ENCODE measurements at regions of chr4 and their contacts with region 1.

Region 1: DNA sequence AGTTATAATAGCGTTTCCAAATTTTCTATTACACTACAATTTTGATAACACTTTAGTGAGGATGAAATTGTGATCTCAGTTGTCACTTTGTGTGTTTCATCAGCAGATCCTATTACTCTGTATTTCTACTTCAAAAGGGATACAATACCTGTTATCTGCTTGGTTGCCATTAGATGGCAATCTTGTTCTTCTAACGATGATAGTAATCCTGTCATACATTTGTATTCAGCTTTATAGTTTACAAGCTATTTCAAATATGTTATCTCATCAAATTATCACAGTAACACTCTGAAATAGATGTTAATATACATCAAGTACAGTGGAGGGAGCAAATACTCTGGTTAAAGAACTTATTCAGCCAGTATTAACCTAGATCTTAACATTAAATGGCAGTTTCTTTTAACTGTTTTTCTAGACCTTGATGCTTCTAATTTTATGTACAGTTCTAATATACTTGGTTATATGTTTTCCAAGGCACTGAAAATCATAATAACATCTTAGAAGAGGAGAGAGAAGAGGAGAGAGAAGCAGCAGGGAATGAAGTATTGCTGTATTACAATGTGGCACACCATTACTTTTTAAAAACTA is 292.0 kb downstream of the CCSER1 start:
- H3K4me3 Mint-ChIP-seq: no peak overlapping the region
- H3K27ac Mint-ChIP-seq: no peak overlapping the region
- H3K4me1 Mint-ChIP-seq: no peaks in the 10 kb centered on the region
- H3K27me3 Mint-ChIP-seq: no peaks in the 10 kb centered on the region

Region 2: GRCh38 chr4:90745176-90745575 is 326.0 kb after region 1 on chr4:
- intact Hi-C with region 1: no loop called
- H3K4me3 Mint-ChIP-seq: no peak overlapping the region
- H3K27ac Mint-ChIP-seq: no peak overlapping the region
- H3K4me1 Mint-ChIP-seq: no peaks in the 10 kb centered on the region
- H3K27me3 Mint-ChIP-seq: no peaks in the 10 kb centered on the region

Region 3: GRCh38 chr4:92387459-92388069 is 1968.3 kb after region 1 on chr4:
- intact Hi-C with region 1: loop called (anchors 5 kb)
- H3K4me3 Mint-ChIP-seq: no peak overlapping the region
- H3K27ac Mint-ChIP-seq: no peak overlapping the region
- H3K4me1 Mint-ChIP-seq: no peaks in the 10 kb centered on the region
- H3K27me3 Mint-ChIP-seq: no peaks in the 10 kb centered on the region